Heart right ventricle (tissue), 16 donors: ENCODE measurements at regions of chr15 and their contacts with region 1.

Region 1: DNA sequence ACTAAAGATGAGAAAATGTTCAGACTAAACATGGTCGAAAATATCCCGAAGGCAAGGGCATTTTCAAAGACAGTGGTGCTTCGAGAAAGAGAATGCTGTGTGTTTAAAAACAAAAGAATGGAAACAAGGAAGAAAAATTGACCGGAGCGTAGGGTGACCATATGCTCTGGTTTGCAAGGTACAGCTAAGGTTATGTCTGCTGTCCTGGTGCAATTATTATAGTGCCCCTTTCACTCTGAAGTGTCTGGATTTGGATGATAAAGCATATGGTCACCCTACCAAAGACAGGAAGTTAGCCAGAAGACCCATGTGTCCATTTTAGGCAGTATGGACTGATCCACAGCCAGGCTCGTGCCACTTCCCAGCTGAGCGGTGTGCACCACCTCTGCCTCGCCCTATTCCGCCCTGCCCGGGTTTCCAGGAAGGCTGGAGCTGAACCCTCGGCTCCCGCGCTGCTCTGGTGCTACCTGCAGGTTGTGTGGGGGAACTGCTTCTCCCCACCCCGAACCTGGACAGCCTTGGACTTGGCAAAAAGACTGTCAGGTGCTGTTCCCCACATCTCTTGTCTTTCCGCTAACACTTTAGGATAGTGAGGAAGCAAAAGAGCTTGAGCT is 25.2 kb downstream of the GOLGA6D start:
- DNase-seq: peak in 1 of 2 donors; percentile 31
- ATAC-seq: peak in 4 of 8 donors; percentile 61 to 71 (median 64)
- H3K4me3 ChIP-seq: no peak overlapping the region
- H3K27ac ChIP-seq: no peak overlapping the region
- H3K4me1 ChIP-seq: no peaks in the 10 kb centered on the region
- H3K27me3 ChIP-seq: peaks cover 0 to 57% (median 33%) of the 10 kb centered on the region in 7 donors
- CTCF ChIP-seq: peak in 6 of 9 donors; percentile 12 to 35 (median 29)

Region 2: DNA sequence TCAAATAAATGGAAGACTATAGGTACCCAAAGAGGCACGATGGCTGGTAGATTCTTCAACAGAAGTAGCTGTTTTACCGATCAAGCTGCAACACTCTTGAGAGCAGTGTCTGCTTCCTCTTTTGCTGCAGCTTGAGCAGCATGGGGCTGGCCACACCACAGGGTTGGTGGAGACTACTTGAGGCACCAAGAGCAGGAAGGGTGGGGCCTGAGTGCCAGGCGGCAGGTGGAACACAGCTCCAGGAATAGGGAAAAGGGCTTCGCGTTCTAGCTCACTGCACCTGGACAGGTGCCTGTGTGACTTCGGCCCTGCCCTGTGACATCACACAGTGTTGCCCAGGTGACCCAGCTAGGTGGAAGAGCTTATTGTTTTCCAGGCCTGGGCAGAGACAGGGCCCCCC is 1071.9 kb before region 1 on chr15 and contains the start of gene CCDC33:
- intact Hi-C with region 1: no loop called
- DNase-seq: no peak
- ATAC-seq: no peak
- H3K4me3 ChIP-seq: no peak within 1 kb of the TSS
- H3K27ac ChIP-seq: no peak within 1 kb of the TSS
- H3K4me1 ChIP-seq: peaks cover 15 to 21% (median 18%) of the 10 kb centered on the region in 9 donors
- H3K27me3 ChIP-seq: no peaks in the 10 kb centered on the region
- CTCF ChIP-seq: no peak
- total RNA-seq, gene CCDC33: not detected

Region 3: GRCh38 chr15:75023181-75023871 is 284.6 kb before region 1 on chr15 and contains the start of gene PPCDC:
- intact Hi-C with region 1: loop called in 2 of 10 experiments (anchors 10 kb)
- DNase-seq: peak; percentile 97
- ATAC-seq: peak; percentile 97 to 100 (median 99)
- H3K4me3 ChIP-seq: peak within 1 kb of the TSS; percentile 47 to 98 (median 86)
- H3K27ac ChIP-seq: peak within 1 kb of the TSS in 9 of 10 donors; percentile 88 to 97 (median 91)
- H3K4me1 ChIP-seq: peaks cover 4 to 28% (median 16%) of the 10 kb centered on the region in 9 donors
- H3K27me3 ChIP-seq: no peaks in the 10 kb centered on the region
- CTCF ChIP-seq: no peak
- total RNA-seq, gene PPCDC: 3.6 to 11.0 (median 5.8) TPM

Region 4: DNA sequence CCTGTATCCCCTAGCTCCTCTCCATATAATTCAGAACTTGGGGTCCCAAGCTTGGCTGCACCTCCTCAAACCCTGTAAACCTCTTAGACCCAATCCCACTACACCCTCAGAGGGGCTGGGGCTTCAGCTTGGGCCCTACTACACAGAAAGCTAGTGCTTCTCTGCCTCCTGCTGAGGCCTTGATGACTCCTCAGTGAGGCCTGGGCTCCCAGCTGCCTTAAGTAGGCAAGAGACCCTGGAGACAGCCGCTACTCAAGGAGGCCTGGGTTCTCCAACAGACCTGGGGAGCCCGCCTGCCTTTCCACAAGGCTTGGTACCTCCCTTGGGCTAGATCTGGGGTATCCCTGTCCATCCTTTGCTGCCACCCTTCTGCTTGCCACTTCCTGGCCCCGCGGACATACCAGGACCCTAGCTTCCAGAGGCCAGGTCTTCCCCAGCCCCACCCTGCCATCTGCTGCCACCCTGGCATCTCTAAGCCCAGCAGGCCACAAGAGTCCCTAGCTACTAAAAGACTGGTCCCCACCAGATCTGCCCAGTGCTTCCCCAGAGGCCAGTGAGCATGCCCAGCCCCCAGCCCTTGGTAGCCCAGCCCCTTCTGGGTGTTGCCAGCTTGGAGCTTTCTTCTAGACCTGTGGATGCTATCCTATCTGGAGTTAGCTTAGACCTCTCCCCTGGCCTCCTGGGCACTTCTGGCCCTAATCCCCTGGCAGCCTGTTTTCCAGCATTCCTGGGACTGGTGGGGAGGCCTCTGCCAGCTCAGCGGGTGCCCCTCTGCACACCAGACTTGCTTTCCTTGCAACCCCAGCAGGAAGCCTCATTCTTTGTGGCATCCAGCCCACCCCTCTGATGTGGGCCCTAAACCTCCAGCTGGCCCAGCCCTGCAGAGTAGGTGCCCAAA is 92.5 kb before region 1 on chr15:
- intact Hi-C with region 1: loop called in 1 of 10 experiments (anchors 10 kb)
- DNase-seq: no peak
- ATAC-seq: peak in 4 of 8 donors; percentile 2 to 14 (median 12)
- H3K4me3 ChIP-seq: no peak overlapping the region
- H3K27ac ChIP-seq: no peak overlapping the region
- H3K4me1 ChIP-seq: peaks cover 2 to 31% (median 23%) of the 10 kb centered on the region in 9 donors
- H3K27me3 ChIP-seq: no peaks in the 10 kb centered on the region
- CTCF ChIP-seq: no peak

Region 5: GRCh38 chr15:75249726-75250125 is 58.2 kb before region 1 on chr15:
- intact Hi-C with region 1: loop called in 2 of 10 experiments (anchors 10 kb)
- DNase-seq: no peak
- ATAC-seq: no peak
- H3K4me3 ChIP-seq: no peak overlapping the region
- H3K27ac ChIP-seq: no peak overlapping the region
- H3K4me1 ChIP-seq: no peaks in the 10 kb centered on the region
- H3K27me3 ChIP-seq: peaks cover 0 to 41% (median 25%) of the 10 kb centered on the region in 7 donors
- CTCF ChIP-seq: no peak

Region 6: GRCh38 chr15:75327005-75327404 is 19.1 kb after region 1 on chr15:
- intact Hi-C with region 1: no loop called
- DNase-seq: no peak
- ATAC-seq: no peak
- H3K4me3 ChIP-seq: no peak overlapping the region
- H3K27ac ChIP-seq: no peak overlapping the region
- H3K4me1 ChIP-seq: no peaks in the 10 kb centered on the region
- H3K27me3 ChIP-seq: no peaks in the 10 kb centered on the region
- CTCF ChIP-seq: no peak

Region 7: GRCh38 chr15:75362642-75363249 is 54.9 kb after region 1 on chr15:
- intact Hi-C with region 1: no loop called
- DNase-seq: no peak
- ATAC-seq: no peak
- H3K4me3 ChIP-seq: no peak overlapping the region
- H3K27ac ChIP-seq: no peak overlapping the region
- H3K4me1 ChIP-seq: peaks cover 0 to 11% (median 9%) of the 10 kb centered on the region in 9 donors
- H3K27me3 ChIP-seq: no peaks in the 10 kb centered on the region
- CTCF ChIP-seq: no peak

Region 8: GRCh38 chr15:75380773-75381172 is 72.9 kb after region 1 on chr15:
- intact Hi-C with region 1: no loop called
- DNase-seq: no peak
- ATAC-seq: no peak
- H3K4me3 ChIP-seq: no peak overlapping the region
- H3K27ac ChIP-seq: no peak overlapping the region
- H3K4me1 ChIP-seq: no peaks in the 10 kb centered on the region
- H3K27me3 ChIP-seq: no peaks in the 10 kb centered on the region
- CTCF ChIP-seq: no peak